ENCODE measurements at regions of chr17 and their contacts with region 1.

Region 1: DNA sequence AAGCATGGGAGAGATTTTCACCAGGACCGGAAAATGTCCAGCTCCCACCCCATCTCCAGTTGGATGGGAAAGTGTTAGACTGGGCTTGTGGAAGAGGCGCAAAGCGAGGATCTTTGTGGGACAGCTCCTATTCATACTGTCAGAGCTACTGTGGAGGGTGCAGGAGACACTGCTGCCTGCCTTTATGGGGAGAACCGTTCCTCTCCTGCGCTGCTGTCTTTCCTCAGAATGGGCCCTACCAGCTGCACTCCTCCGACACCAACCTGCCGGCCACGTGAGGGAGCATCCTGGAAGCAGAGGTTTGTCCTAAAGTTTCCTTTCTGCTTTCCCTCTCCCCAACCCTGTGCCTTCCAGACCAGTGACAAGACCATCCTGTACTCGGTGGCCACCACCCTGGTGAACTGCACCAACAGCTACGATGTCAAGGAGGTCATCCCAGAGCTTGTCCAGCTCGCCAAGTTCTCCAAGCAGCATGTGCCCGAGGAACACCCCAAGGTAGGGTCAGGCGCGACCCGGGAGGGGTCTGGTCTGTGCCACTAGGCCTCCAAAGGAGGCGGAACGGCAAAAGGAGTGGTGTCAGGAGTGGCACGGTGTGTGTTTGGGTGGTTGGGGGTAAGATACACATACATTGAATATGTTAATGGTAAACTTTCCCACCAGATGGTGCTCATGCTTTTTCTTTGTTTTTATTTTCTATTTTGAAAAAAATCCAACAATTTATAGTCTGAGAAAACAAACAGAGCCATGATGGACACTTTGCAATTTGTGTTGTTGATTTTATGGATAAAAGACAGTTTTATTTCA is 23.0 kb downstream of the SLC35G3 start:
- DNase-seq: no peak
- H3K4me3 Mint-ChIP-seq: no peak overlapping the region
- H3K27ac Mint-ChIP-seq: no peak overlapping the region
- H3K4me1 Mint-ChIP-seq: no peaks in the 10 kb centered on the region
- H3K27me3 Mint-ChIP-seq: peaks cover 45% of the 10 kb centered on the region
- CTCF ChIP-seq: no peak

Region 2: DNA sequence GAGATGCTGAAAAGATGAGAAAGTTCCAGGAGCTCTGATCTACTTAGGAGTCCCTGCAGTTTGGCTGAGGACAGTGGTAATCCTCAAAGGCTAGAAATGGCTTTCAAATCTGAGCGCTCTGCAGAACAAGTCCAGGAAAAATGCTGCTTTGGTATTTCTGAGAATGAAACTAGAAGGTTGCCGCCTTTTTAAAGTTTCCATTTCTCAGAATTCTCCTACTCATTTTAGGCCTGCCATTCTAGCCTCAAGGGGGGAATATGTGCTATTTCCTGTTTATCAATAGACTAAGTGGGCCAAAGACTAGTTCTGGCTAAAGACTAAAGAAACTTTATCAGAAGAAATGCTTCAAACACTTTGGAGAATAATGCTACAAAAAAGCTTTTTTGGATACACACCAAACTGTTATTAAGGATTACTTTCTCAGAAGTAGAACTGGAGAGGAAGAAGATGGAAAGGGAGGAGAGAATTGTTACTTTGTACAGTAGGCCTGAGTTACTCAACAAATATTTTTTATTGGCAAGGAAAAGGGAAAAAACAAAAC is 366.5 kb after region 1 on chr17 and contains the start of gene SLFN12L:
- CTCF ChIA-PET with region 1: interaction called, 5 read pairs
- intact Hi-C with region 1: loop called (anchors 1 kb)
- DNase-seq: no peak
- H3K4me3 Mint-ChIP-seq: no peak within 1 kb of the TSS
- H3K27ac Mint-ChIP-seq: no peak within 1 kb of the TSS
- H3K4me1 Mint-ChIP-seq: peaks cover 21% of the 10 kb centered on the region
- H3K27me3 Mint-ChIP-seq: no peaks in the 10 kb centered on the region
- CTCF ChIP-seq: no peak
- total RNA-seq, gene SLFN12L: 0.14 and 0.51 TPM in 2 replicates